Panc1 (cell line): ENCODE measurements at regions of chr12 and their contacts with region 1.

Region 1: DNA sequence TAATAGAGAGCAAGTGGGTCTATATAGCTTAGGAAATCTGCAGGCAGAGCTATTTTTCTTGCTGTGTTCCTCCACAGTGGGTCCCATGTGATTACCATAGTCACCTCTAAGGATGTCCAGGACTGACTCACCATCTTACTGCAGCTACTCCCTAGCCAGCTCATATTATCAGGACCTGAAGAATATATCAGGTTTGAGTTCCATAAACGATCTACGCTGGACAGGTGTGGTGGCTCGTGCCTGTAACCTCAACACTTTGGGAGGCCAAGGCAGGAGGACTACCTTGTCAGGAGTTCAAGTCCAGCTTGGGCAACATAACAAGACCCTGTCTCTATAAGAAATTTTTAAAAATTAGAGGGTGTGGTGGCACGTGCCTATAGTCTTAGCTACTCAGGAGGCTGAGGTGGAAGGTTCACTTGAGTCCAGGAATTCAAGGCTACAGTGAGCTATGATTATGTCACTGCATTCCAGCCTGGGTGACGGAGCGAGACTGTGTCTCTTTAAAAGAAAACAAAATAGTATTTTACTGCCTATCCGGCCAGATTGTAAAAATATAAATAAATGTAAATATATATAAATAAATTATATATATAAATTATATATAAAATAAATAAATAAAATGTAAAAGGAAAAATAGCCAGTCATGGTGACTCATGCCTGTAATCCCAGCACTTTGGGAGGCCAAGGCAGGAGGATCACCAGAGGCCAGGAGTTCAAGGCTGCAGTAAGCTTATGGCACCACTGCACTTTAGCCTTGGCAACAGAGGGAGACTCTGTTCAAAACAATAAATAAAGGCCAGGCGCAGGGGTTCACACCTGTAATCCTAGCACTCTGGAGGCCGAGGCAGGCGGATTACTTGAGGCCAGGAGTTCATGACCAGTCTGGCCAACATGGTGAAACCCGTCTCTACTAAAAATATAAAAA is 6.9 kb upstream of the SPRYD4 start:
- DNase-seq: peak; percentile 72
- ATAC-seq: 0 out of 2 replicates have a peak, but pooled peaks have one; percentile 24
- H3K4me3 ChIP-seq: no peak overlapping the region
- H3K27ac ChIP-seq: no peak overlapping the region
- H3K4me1 ChIP-seq: no peaks in the 10 kb centered on the region
- H3K27me3 ChIP-seq: no peaks in the 10 kb centered on the region
- CTCF ChIP-seq: no peak

Region 2: GRCh38 chr12:56338308-56339157 is 123.0 kb before region 1 on chr12 and contains the start of gene IL23A:
- CTCF ChIA-PET with region 1: no interaction called
- POLR2A ChIA-PET with region 1: interaction called, 10 read pairs
- in situ Hi-C with region 1: no loop called
- intact Hi-C with region 1: no loop called
- DNase-seq: no peak
- ATAC-seq: no peak; the same call in 1 of the 2 replicates
- H3K4me3 ChIP-seq: no peak within 1 kb of the TSS
- H3K27ac ChIP-seq: no peak within 1 kb of the TSS
- H3K4me1 ChIP-seq: peaks cover 6% of the 10 kb centered on the region; the same call in 1 of the 2 replicates
- H3K27me3 ChIP-seq: no peaks in the 10 kb centered on the region
- CTCF ChIP-seq: no peak
- total RNA-seq, gene IL23A: 0.41 TPM

Region 3: DNA sequence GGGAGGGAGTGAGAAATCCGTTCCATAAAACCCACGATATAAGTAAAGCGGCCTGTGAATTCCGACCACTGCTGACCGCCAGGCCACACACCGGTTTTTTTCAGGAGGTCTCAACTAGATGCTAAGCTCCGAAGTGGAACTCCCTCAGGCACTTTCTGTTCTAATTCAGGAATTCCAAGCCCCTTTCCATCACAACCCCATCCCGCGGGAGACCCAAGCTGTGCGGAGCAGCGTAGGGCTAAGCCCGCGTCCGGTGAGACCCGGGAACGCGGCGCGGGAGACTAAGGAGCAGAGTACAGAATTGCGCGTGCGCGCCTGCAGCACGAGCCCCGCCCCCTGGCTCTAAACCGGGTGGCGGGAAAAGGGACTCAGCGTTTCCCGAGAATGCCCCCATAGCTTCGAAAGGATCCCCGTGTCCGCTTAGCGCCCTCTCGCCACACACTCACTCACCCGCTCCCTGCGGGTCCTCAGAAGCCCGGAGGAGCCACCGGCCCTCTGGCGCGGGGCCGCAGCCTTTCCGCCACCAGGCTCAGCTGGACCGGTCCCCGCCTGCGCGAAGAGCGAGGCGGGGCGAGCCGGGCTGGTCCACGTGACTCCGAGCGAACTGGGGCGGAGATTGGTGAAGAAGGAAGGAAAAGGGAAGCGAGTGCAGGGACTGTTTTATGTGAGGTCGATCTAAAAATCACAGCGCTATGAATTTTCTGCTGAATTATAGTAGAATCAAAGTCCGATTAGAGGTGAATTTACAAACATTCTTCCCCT is 12.5 kb before region 1 on chr12 and contains the start of gene TIMELESS:
- CTCF ChIA-PET with region 1: interaction called, 12 read pairs
- POLR2A ChIA-PET with region 1: interaction called, 13 read pairs
- in situ Hi-C with region 1: no loop called
- intact Hi-C with region 1: no loop called
- DNase-seq: peak; percentile 81
- ATAC-seq: peak; percentile 99
- H3K4me3 ChIP-seq: peak within 1 kb of the TSS; percentile 72 to 84
- H3K27ac ChIP-seq: peak within 1 kb of the TSS; percentile 99
- H3K4me1 ChIP-seq: 0 out of 2 replicates have a peak, but pooled peaks cover 5% of the 10 kb centered on the region
- H3K27me3 ChIP-seq: no peaks in the 10 kb centered on the region
- CTCF ChIP-seq: no peak
- total RNA-seq, gene TIMELESS: 46.2 TPM

Region 4: GRCh38 chr12:56630160-56630632 is 168.7 kb after region 1 on chr12 and contains the start of gene BAZ2A:
- CTCF ChIA-PET with region 1: no interaction called
- POLR2A ChIA-PET with region 1: interaction called, 27 read pairs
- in situ Hi-C with region 1: no loop called
- intact Hi-C with region 1: no loop called
- DNase-seq: no peak
- ATAC-seq: peak; percentile 82
- H3K4me3 ChIP-seq: peak within 1 kb of the TSS; percentile 96 to 99
- H3K27ac ChIP-seq: peak within 1 kb of the TSS; percentile 96
- H3K4me1 ChIP-seq: peaks cover 41% of the 10 kb centered on the region
- H3K27me3 ChIP-seq: no peaks in the 10 kb centered on the region
- CTCF ChIP-seq: no peak
- total RNA-seq, gene BAZ2A: 131 TPM